ENCODE measurements at regions of chr7 and their contacts with region 1.

Region 1: DNA sequence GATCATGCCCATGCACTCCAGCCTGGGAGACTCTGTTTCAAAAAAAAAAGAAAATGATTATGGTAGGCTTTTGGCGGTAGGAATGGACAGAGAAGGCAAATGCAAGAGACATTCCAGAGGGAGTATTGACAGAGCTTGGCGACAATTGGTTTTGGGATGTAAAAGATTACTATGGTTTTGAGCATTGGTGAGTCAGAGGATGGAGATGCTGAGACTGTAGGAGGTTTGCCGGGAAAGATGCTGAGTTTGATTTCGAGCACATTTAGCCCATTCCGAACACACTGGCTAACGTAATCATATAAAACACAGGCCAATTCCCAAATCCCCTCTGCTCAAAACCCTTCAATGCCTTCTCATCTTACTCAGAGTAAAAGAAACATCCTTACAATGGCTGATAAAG is 161.6 kb upstream of the MKLN1 start:
- DNase-seq: no peak
- ATAC-seq: no peak
- H3K4me3 ChIP-seq: no peak overlapping the region
- H3K4me3 Mint-ChIP-seq: no peak overlapping the region
- H3K27ac ChIP-seq: no peak overlapping the region
- H3K27ac Mint-ChIP-seq: no peak overlapping the region
- H3K4me1 ChIP-seq: no peaks in the 10 kb centered on the region
- H3K4me1 Mint-ChIP-seq: no peaks in the 10 kb centered on the region
- H3K27me3 ChIP-seq: peaks cover 0 to 4% of the 10 kb centered on the region in 2 experiments
- H3K27me3 Mint-ChIP-seq: peaks cover 0 to 3% of the 10 kb centered on the region in 2 donors

Region 2: DNA sequence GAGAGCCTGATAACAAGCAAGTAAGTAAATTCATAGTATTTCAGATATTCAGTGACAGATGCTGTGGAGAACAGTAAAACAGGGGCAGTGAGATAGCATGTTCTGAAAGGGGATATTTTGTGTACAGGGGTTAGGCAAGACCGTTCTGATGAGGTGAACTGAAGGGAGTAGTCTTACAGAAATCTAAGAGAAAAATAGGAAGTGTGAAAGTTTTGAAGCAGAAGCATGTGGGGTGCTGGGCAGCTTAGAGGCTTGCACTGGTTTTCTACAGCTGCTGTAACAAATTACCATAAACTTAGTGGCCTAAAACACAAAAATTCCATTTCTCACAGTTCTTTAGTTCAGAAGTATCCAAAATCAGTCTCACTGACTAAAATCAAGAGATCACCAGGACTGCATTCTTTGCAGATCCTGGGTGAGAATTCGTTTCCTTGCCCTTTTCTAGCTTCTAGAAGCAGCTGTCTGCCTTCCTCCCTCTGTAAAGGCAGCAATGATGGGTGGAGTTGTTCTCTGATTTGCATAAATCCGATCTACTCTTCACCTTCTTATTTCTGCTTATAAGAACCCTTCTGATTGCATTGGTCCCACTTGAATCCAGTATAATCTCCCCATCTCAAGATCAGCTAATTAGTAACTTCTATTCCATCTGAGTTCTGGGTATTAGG is 424.6 kb before region 1 on chr7:
- CTCF ChIA-PET with region 1: no interaction called
- POLR2A ChIA-PET with region 1: interaction called in 1 of 2 experiments, 12 read pairs
- DNase-seq: no peak
- ATAC-seq: no peak
- H3K4me3 ChIP-seq: no peak overlapping the region
- H3K4me3 Mint-ChIP-seq: no peak overlapping the region
- H3K27ac ChIP-seq: no peak overlapping the region
- H3K27ac Mint-ChIP-seq: no peak overlapping the region
- H3K4me1 ChIP-seq: no peaks in the 10 kb centered on the region
- H3K4me1 Mint-ChIP-seq: no peaks in the 10 kb centered on the region
- H3K27me3 ChIP-seq: peaks cover 11% of the 10 kb centered on the region in 2 experiments
- H3K27me3 Mint-ChIP-seq: peaks cover 20 to 36% of the 10 kb centered on the region in 2 donors

Region 3: DNA sequence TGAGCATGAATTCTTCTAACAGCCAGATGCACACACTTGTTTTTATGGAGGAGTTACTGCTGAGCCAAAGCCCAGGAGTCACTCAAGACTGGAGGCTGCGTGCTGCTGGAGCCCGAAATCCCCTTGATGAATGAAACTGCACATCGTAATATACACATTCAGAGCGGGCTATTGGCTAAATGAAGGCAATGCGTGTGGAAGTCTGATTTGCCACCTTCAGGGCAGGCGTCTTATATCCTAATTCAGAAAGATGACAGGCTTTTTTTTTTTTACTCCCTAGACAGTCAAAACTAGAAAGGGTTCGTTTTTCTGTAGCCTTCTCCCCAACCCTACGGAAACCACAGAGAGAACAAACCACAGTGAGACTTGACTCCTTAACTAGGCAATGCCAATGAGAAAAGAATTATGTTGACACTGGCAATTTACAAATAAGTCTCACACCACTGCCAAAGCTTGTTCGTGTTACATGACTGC is 204.9 kb before region 1 on chr7:
- CTCF ChIA-PET with region 1: no interaction called
- POLR2A ChIA-PET with region 1: no interaction called
- DNase-seq: peak in 33 of 35 experiments; percentile 26 to 92 (median 75)
- ATAC-seq: peak; percentile 78 to 84 (median 81)
- H3K4me3 ChIP-seq: peak overlapping the region in 1 of 2 donors; percentile 45
- H3K4me3 Mint-ChIP-seq: peak overlapping the region; percentile 79 to 90 (median 87)
- H3K27ac ChIP-seq: peak overlapping the region; percentile 97
- H3K27ac Mint-ChIP-seq: peak overlapping the region; percentile 96
- H3K4me1 ChIP-seq: peaks cover 31 to 57% of the 10 kb centered on the region in 2 experiments
- H3K4me1 Mint-ChIP-seq: peaks cover 42 to 75% (median 72%) of the 10 kb centered on the region in 3 donors
- H3K27me3 ChIP-seq: no peaks in the 10 kb centered on the region
- H3K27me3 Mint-ChIP-seq: no peaks in the 10 kb centered on the region

Region 4: DNA sequence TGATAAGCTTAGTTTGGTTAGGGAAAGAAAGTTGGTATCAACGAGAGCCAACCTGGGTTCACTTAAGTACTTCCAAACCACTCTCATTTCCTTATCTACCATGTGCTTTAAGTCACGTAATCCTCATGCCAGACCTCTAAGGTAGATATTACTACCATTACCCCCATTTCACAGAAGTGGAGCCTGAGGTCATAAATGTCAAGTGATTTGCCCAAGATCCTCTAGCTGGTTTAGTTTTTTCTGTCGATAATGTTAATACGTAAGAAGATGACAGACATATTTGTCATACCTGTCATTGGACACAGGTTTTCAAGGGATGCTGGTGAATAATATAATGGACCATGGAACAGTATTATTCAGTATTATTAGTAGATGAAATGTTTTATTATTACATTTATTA is 35.7 kb before region 1 on chr7:
- CTCF ChIA-PET with region 1: interaction called in 1 of 2 experiments, 10 read pairs
- POLR2A ChIA-PET with region 1: no interaction called
- DNase-seq: no peak
- ATAC-seq: no peak
- H3K4me3 ChIP-seq: no peak overlapping the region
- H3K4me3 Mint-ChIP-seq: no peak overlapping the region
- H3K27ac ChIP-seq: no peak overlapping the region
- H3K27ac Mint-ChIP-seq: no peak overlapping the region
- H3K4me1 ChIP-seq: no peaks in the 10 kb centered on the region
- H3K4me1 Mint-ChIP-seq: no peaks in the 10 kb centered on the region
- H3K27me3 ChIP-seq: no peaks in the 10 kb centered on the region
- H3K27me3 Mint-ChIP-seq: no peaks in the 10 kb centered on the region